ENCODE measurements at regions of chr17 and their contacts with region 1.

Region 1: GRCh38 chr17:70295731-70296130 is 126.4 kb downstream of the KCNJ2 start:
- DNase-seq: no peak
- H3K4me3 ChIP-seq: no peak overlapping the region
- H3K27ac ChIP-seq: no peak overlapping the region
- H3K4me1 ChIP-seq: peaks cover 7% of the 10 kb centered on the region
- H3K27me3 ChIP-seq: no peaks in the 10 kb centered on the region
- CTCF ChIP-seq: no peak
- POLR2A ChIP-seq: no peak

Region 2: GRCh38 chr17:69567130-69567529 is 728.6 kb before region 1 on chr17:
- CTCF ChIA-PET with region 1: no interaction called
- POLR2A ChIA-PET with region 1: no interaction called
- dilution Hi-C with region 1: no loop called
- intact Hi-C with region 1: loop called (anchors 10 kb)
- DNase-seq: no peak
- H3K4me3 ChIP-seq: no peak overlapping the region
- H3K27ac ChIP-seq: no peak overlapping the region
- H3K4me1 ChIP-seq: no peaks in the 10 kb centered on the region
- H3K27me3 ChIP-seq: peaks cover 0 to 4% of the 10 kb centered on the region in 2 experiments
- CTCF ChIP-seq: no peak
- POLR2A ChIP-seq: no peak